Activated naive CD4-positive, alpha-beta T cell treated with anti-CD3 and anti-CD28 coated beads for 36 hours (primary cell): ENCODE measurements at regions of chr10 and their contacts with region 1.

Region 1: DNA sequence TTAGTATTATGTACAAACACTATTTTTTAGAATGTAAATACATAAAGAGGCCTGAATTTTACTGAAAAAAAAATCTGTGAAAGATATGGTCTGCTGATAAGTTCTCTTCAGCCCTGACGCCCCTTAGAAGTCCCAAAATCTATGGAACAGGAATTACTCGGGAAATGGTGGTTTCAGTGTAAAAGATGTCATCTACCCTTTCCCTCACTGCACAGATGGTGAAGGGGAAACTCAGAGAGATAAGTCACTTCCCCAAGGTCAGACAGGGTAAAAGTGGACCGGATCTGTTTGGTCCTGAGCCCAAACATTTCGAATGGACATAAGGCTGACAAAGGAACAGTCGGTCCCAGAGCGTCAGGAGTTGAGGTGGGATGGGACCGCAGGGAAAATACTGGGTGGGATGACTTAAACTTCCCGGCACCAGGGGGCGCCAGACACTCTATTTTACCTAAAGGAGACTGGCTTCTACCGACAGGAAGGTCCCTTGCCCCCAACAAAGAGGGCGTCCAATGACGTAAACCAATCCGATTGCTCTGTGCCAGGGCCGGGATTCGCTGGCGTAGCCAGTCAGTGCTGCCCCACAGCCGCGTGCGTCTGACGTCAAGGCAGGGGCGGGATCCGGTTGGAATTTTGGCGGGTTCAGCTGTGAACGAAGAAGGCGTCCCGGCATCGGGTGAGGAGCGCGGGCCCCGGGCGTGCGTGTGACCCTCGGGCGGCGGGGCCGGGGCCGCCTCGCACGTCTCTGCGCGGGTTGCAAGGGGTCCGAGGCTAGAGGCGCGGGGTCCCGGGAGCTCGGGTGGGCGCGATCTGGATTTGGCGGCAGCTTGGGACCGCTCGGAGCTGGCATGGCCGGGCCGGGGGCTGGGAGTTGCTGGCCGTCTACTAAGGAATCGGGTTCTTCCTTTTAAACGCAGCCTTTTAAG is at the start of gene MCM10:
- DNase-seq: peak; percentile 99
- H3K4me3 Mint-ChIP-seq: peak within 1 kb of the TSS; percentile 88
- H3K27ac Mint-ChIP-seq: peak within 1 kb of the TSS; percentile 63
- H3K4me1 Mint-ChIP-seq: peaks cover 27% of the 10 kb centered on the region
- H3K27me3 Mint-ChIP-seq: peaks cover 2% of the 10 kb centered on the region
- total RNA-seq, gene MCM10: 76.9 to 81.1 TPM

Region 2: GRCh38 chr10:13348216-13349017 is 187.2 kb after region 1 on chr10 and contains the start of gene SEPHS1:
- CTCF ChIA-PET with region 1: interaction called, 5 read pairs
- intact Hi-C with region 1: loop called (anchors 1 kb)
- DNase-seq: peak; percentile 91
- H3K4me3 Mint-ChIP-seq: peak within 1 kb of the TSS; percentile 88
- H3K27ac Mint-ChIP-seq: peak within 1 kb of the TSS; percentile 94
- H3K4me1 Mint-ChIP-seq: peaks cover 57% of the 10 kb centered on the region
- H3K27me3 Mint-ChIP-seq: no peaks in the 10 kb centered on the region
- total RNA-seq, gene SEPHS1: 75.6 to 79.6 TPM

Region 3: GRCh38 chr10:13440185-13441061 is 279.2 kb after region 1 on chr10:
- CTCF ChIA-PET with region 1: interaction called, 5 read pairs
- intact Hi-C with region 1: loop called (anchors 1 kb)
- DNase-seq: peak; percentile 75
- H3K4me3 Mint-ChIP-seq: peak overlapping the region; percentile 61
- H3K27ac Mint-ChIP-seq: no peak overlapping the region
- H3K4me1 Mint-ChIP-seq: peaks cover 7% of the 10 kb centered on the region
- H3K27me3 Mint-ChIP-seq: peaks cover 38% of the 10 kb centered on the region

Region 4: DNA sequence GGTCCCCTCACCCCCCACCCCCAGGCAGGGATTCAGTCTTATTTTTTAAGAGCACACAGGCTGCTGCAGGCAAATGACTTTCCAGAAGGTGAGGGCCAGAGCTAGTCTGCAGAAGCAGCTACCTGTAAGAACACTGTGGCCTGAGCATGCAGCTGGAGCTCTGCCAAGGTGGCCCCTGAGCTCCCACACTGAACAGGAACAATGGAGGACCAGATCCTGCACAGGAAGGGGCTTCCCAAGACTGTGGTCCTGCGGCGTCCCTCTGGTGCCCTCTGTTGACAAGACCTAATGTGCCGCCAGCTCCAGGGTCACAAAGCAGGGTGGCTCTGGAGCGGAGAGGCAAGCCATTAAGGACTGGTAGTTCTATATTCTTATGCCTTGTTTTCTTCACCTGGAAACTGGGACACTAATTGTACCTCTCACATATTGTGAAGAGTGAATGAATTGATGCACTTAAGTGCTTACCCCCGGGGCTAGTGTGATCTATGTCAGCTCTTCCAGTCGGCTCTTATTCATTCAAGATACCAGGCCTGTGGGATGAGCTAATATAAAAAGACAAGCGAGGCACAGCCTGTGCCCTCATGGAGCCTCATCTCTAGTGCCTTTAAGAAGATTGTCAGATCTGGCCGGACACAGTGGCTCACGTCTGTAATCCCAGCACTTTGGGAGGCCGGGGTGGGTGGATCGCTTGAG is 375.6 kb after region 1 on chr10:
- CTCF ChIA-PET with region 1: no interaction called
- intact Hi-C with region 1: loop called (anchors 2 kb)
- DNase-seq: peak; percentile 70
- H3K4me3 Mint-ChIP-seq: no peak overlapping the region
- H3K27ac Mint-ChIP-seq: no peak overlapping the region
- H3K4me1 Mint-ChIP-seq: no peaks in the 10 kb centered on the region
- H3K27me3 Mint-ChIP-seq: peaks cover 48% of the 10 kb centered on the region